Common myeloid progenitor, CD34-positive (primary cell): ENCODE measurements at regions of chr1 and their contacts with region 1.

Region 1: GRCh38 chr1:153967082-153968000 is at the start of gene CREB3L4:
- DNase-seq: peak; percentile 97 to 99 (median 99)
- H3K4me3 ChIP-seq: peak within 1 kb of the TSS; percentile 81 to 97 (median 86)
- H3K27ac ChIP-seq: peak within 1 kb of the TSS; percentile 75 to 91
- H3K4me1 ChIP-seq: peaks cover 4 to 61% (median 49%) of the 10 kb centered on the region in 4 experiments
- H3K27me3 ChIP-seq: no peaks in the 10 kb centered on the region

Region 2: GRCh38 chr1:153977250-153978240 is 10.2 kb after region 1 on chr1 and contains the start of gene JTB:
- CTCF ChIA-PET with region 1: interaction called, 47 read pairs
- POLR2A ChIA-PET with region 1: interaction called, 25 read pairs
- DNase-seq: peak; percentile 78 to 91 (median 88)
- H3K4me3 ChIP-seq: peak within 1 kb of the TSS; percentile 80 to 98 (median 88)
- H3K27ac ChIP-seq: peak within 1 kb of the TSS; percentile 75 to 93
- H3K4me1 ChIP-seq: peaks cover 4 to 35% (median 22%) of the 10 kb centered on the region in 4 experiments
- H3K27me3 ChIP-seq: no peaks in the 10 kb centered on the region